Transverse colon (tissue), 4 donors: ENCODE measurements at regions of chr20 and their contacts with region 1.

Region 1: DNA sequence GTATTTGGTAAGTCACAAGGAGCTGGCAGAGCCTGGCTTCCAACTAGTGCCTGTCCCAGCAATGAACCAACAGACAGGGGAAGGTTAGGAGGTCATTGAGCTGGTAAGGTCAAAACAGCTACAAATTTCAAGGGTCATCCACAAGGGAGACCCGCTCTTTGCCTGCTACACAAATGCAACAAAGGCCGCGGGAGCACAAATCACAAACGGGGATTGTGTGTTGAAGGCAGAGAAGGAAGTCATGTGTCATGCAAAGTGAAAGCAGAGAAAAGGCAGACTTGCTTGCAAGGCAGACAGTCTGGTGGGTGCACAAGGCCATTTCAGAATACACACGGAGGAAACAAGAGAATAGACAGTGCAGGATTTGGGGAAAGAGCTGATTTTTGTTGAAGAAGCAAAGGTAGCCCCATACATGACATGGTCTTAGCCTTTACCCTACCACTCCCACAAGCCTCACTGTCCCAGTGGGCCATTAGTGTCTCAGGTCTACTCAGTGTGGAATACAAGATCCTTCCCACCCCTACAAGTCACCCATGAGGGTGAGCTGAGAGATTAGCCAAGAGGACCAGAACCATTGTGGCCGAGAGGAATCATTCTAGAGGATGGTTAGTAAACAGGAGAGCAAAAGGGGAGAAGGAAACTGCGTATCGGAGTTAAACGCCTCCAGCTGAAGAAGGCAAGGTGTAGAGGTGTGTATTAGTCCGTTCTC is 18.1 kb upstream of the SAMHD1 start:
- DNase-seq: no peak
- H3K4me3 ChIP-seq: no peak overlapping the region
- H3K27ac ChIP-seq: peak overlapping the region; percentile 12 to 47 (median 29)
- H3K4me1 ChIP-seq: peaks cover 0 to 5% (median 0%) of the 10 kb centered on the region in 4 donors
- H3K27me3 ChIP-seq: no peaks in the 10 kb centered on the region
- CTCF ChIP-seq: no peak
- EP300 ChIP-seq: no peak
- POLR2A ChIP-seq: no peak

Region 2: DNA sequence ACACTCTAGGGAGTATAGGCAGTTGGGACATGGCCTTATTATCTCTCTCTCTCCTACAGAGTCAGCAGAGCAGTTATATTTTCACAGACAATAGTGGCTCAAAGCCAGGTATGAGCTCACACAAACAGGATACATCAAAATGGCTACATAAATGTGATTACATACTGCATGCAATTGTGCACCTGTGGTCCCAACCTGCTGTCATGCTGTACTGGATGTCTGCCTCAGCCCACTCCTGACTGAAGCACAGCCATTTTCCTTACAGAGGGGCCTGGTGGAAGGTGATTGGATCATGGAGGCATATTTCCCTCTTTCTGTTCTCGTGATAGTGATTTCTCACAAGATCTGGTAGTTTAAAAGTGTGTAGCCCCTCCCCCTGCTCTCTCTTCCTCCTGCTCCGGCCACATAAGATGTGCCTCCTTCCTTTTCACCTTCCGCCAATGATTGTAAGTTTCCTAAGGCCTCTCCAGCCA is 18.9 kb after region 1 on chr20:
- in situ Hi-C with region 1: no loop called
- intact Hi-C with region 1: loop called (anchors 2 kb)
- DNase-seq: no peak
- H3K4me3 ChIP-seq: no peak overlapping the region
- H3K27ac ChIP-seq: no peak overlapping the region
- H3K4me1 ChIP-seq: peaks cover 0 to 6% (median 0%) of the 10 kb centered on the region in 4 donors
- H3K27me3 ChIP-seq: no peaks in the 10 kb centered on the region
- CTCF ChIP-seq: no peak
- EP300 ChIP-seq: no peak
- POLR2A ChIP-seq: no peak